ENCODE measurements at regions of chr2 and their contacts with region 1.

Region 1: GRCh38 chr2:68282811-68283418 is 30.6 kb upstream of the PPP3R1 start:
- DNase-seq: no peak
- ATAC-seq: no peak

Region 2: DNA sequence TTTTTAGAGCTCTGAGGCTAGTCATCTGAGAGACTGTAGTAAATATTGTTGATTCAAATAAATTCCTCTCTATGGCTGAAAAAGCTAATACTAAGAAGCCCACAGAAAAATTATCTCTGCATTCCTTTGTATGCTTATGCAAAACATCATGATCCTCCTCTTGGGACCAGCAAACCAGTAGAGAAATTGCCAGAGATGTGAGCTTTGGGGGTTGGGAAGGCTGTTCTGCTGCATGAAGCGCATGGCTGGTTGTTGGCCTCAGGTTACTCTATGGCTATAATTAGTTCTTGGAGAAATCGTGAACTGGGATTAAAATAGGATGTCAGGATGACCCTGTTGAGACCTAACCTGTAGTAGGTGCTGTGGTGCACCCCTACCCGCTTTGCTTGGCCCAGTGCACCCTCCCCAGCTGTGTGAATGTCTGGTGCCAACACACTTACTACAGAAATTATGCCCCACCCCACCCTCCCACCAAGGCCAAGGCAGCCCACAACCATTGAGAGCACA is 184.6 kb before region 1 on chr2:
- intact Hi-C with region 1: no loop called
- DNase-seq: no peak
- ATAC-seq: no peak

Region 3: DNA sequence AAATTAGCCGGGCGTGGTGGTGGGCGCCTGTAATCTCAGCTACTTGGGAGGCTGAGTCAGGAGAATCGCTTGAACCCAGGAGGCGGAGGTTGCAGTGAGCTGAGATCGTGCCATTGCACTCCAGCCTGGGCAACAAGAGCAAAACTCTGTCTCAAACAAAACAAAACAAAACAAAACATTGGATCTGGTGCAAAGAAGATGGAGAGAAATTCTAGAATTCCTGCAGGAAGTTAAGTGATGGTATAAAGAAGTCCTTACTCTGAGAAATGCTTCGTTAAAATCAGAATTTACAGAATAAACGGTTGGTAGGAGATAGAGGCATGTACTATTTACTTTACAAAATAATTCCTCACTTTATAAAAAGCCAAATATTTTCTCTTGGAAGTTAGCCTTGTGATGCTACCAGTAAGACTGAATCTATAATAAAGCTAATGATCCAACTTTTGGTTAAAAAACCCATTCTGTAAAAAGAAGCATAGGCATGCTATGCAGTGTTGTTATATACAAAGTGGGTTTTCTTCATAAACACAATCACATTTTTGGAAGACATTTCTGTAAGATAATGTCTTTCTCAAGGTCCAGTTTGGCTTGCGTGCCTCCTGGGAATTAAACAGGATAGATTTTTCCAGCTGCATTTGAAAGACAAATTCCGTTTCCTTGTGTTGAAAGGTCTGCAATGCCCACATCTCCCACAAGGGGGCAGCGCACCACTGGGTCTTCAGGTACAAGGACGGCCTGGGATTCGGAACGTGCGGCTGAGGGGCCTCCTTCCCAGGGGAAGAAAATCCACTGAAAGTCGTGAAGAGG is 160.8 kb before region 1 on chr2:
- intact Hi-C with region 1: loop called (anchors 2 kb)
- DNase-seq: peak; percentile 92
- ATAC-seq: peak; percentile 89

Region 4: GRCh38 chr2:68196120-68196716 is 86.7 kb before region 1 on chr2:
- intact Hi-C with region 1: loop called (anchors 5 kb)
- DNase-seq: no peak
- ATAC-seq: peak; percentile 56

Measured in Right ventricle myocardium superior (tissue), 1 donor.